ENCODE measurements at regions of chr5 and their contacts with region 1.

Region 1: GRCh38 chr5:123344816-123345426 is 78.3 kb downstream of the CEP120 start:
- DNase-seq: no peak
- ATAC-seq: no peak
- H3K4me3 ChIP-seq: no peak overlapping the region
- H3K27ac ChIP-seq: no peak overlapping the region
- H3K4me1 ChIP-seq: no peaks in the 10 kb centered on the region
- H3K27me3 ChIP-seq: no peaks in the 10 kb centered on the region

Region 2: GRCh38 chr5:122896598-122897282 is 448.2 kb before region 1 on chr5:
- intact Hi-C with region 1: loop called (anchors 10 kb)
- DNase-seq: no peak
- ATAC-seq: no peak
- H3K4me3 ChIP-seq: no peak overlapping the region
- H3K27ac ChIP-seq: no peak overlapping the region
- H3K4me1 ChIP-seq: no peaks in the 10 kb centered on the region
- H3K27me3 ChIP-seq: no peaks in the 10 kb centered on the region

Region 3: GRCh38 chr5:122907238-122907637 is 437.7 kb before region 1 on chr5:
- intact Hi-C with region 1: loop called in 2 of 4 experiments (anchors 10 kb)
- DNase-seq: no peak
- ATAC-seq: peak in 1 of 2 donors; percentile 45
- H3K4me3 ChIP-seq: no peak overlapping the region
- H3K27ac ChIP-seq: no peak overlapping the region
- H3K4me1 ChIP-seq: peaks cover 7% of the 10 kb centered on the region
- H3K27me3 ChIP-seq: no peaks in the 10 kb centered on the region

Region 4: GRCh38 chr5:123414975-123415374 is 70.1 kb after region 1 on chr5:
- intact Hi-C with region 1: no loop called
- DNase-seq: no peak
- ATAC-seq: no peak
- H3K4me3 ChIP-seq: no peak overlapping the region
- H3K27ac ChIP-seq: no peak overlapping the region
- H3K4me1 ChIP-seq: no peaks in the 10 kb centered on the region
- H3K27me3 ChIP-seq: no peaks in the 10 kb centered on the region

Measured in right cardiac atrium (tissue), 5 donors.